Esophagus muscularis mucosa (tissue), 4 donors: ENCODE measurements at regions of chr4 and their contacts with region 1.

Region 1: GRCh38 chr4:157973297-157973696 is 199.5 kb downstream of the GASK1B start:
- DNase-seq: no peak
- H3K4me3 ChIP-seq: no peak overlapping the region
- H3K27ac ChIP-seq: no peak overlapping the region
- H3K4me1 ChIP-seq: no peaks in the 10 kb centered on the region
- H3K27me3 ChIP-seq: no peaks in the 10 kb centered on the region
- CTCF ChIP-seq: no peak
- EP300 ChIP-seq: no peak
- POLR2A ChIP-seq: no peak

Region 2: GRCh38 chr4:155974996-155975395 is 1998.3 kb before region 1 on chr4:
- intact Hi-C with region 1: loop called (anchors 5 kb)
- DNase-seq: no peak
- H3K4me3 ChIP-seq: no peak overlapping the region
- H3K27ac ChIP-seq: no peak overlapping the region
- H3K4me1 ChIP-seq: no peaks in the 10 kb centered on the region
- H3K27me3 ChIP-seq: no peaks in the 10 kb centered on the region
- CTCF ChIP-seq: no peak
- EP300 ChIP-seq: no peak
- POLR2A ChIP-seq: no peak

Region 3: DNA sequence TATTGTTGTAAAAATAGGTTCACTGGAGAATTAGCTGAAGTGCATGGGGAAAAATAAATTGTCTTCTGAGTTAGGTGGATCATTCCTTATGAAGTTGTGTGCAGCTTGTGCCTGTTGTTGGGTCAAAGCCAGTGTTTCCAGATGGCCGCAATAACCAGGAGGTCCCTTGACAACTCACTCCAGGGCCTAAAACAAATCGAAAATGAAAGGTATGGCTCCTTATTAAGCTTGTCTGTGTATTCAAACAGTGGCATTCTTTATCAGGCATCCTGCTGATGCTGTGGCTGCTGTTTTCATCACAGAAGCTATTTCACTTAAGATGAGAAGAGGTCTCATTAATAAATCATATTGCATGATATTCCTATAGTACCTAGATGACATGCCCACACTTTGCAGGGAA is 672.6 kb before region 1 on chr4:
- intact Hi-C with region 1: no loop called
- DNase-seq: no peak
- H3K4me3 ChIP-seq: no peak overlapping the region
- H3K27ac ChIP-seq: no peak overlapping the region
- H3K4me1 ChIP-seq: no peaks in the 10 kb centered on the region
- H3K27me3 ChIP-seq: no peaks in the 10 kb centered on the region
- CTCF ChIP-seq: no peak
- EP300 ChIP-seq: no peak
- POLR2A ChIP-seq: no peak

Region 4: GRCh38 chr4:158535130-158535614 is 561.9 kb after region 1 on chr4:
- intact Hi-C with region 1: no loop called
- DNase-seq: no peak
- H3K4me3 ChIP-seq: no peak overlapping the region
- H3K27ac ChIP-seq: no peak overlapping the region
- H3K4me1 ChIP-seq: no peaks in the 10 kb centered on the region
- H3K27me3 ChIP-seq: no peaks in the 10 kb centered on the region
- CTCF ChIP-seq: no peak
- EP300 ChIP-seq: no peak
- POLR2A ChIP-seq: no peak